K562 (cell line): ENCODE measurements at regions of chr11 and their contacts with region 1.

Region 1: DNA sequence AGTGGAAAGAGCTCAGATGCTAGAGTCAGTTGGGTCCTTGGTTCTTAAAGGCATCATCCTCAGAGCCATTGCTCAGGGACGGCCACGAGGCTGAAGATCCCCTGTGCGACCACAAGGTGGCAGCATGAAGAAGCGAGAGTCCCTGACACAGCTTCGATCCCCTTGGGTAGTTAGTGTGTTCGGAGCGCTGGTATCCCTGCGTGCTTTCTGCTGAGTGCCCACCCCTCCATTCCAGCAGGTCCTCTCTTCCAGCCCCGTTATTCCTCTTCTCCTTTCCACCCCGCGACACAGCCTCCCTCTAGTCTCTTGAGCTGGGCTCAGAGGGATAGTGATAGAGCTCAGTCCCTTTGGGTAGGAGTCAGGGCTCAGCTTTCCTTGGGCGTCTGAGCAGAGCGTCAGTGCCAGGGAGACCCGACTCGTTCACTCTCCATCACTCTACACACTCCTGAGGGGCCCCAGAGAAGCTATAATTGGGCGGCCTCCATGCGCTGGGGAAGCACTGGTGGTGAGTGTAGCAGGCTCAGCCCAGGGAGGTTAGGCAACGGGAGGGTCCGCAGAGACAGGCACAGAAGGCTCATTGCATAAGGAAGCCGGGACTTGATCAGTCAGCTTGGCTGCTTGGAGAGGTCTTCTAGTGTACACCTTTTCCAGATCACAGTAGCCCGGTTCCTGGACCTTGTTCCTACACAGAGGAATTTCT is at the start of gene OR51D1:
- DNase-seq: peak; percentile 82 to 87 (median 84)
- ATAC-seq: peak; percentile 99
- H3K4me3 ChIP-seq: no peak within 1 kb of the TSS
- H3K27ac ChIP-seq: no peak within 1 kb of the TSS
- H3K4me1 ChIP-seq: no peaks in the 10 kb centered on the region; a peak in 1 of 5 replicates
- H3K27me3 ChIP-seq: peaks cover 0 to 25% of the 10 kb centered on the region in 2 experiments; a peak in 3 of 5 replicates
- CTCF ChIP-seq: peak; percentile 84 to 91 (median 88)
- EP300 ChIP-seq: no peak
- POLR2A ChIP-seq: no peak
- RAD21 ChIP-seq: peak; percentile 75 to 91
- polyA plus RNA-seq, gene OR51D1: not detected

Region 2: DNA sequence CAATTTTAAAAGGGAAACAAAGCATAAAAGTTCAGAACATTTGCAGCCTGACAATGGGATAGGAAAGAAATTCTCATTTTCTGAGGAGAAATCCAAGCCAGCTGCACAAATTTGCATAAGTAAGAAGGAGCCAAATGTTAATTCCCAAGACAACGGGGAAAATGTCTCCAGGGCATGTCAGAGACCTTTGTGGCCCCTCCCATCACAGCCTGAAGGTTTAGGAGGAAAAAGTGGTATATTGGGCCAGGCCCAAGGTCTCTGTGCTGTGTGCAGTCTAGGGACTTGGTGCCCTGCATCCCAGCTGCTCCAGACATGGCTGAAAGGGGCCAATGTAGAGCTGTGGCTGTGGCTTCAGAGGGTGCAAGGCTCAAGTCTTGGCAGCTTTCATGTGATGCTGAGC is 145.4 kb after region 1 on chr11:
- CTCF ChIA-PET with region 1: no interaction called
- POLR2A ChIA-PET with region 1: no interaction called
- in situ Hi-C with region 1: no loop called
- intact Hi-C with region 1: loop called (anchors 2 kb)
- DNase-seq: no peak
- ATAC-seq: no peak
- H3K4me3 ChIP-seq: no peak overlapping the region
- H3K27ac ChIP-seq: no peak overlapping the region
- H3K4me1 ChIP-seq: no peaks in the 10 kb centered on the region
- H3K27me3 ChIP-seq: peaks cover 0 to 6% of the 10 kb centered on the region in 2 experiments; a peak in 1 of 5 replicates
- CTCF ChIP-seq: no peak
- EP300 ChIP-seq: no peak
- POLR2A ChIP-seq: no peak
- RAD21 ChIP-seq: no peak

Region 3: GRCh38 chr11:4926608-4927007 is 289.5 kb after region 1 on chr11:
- CTCF ChIA-PET with region 1: no interaction called
- POLR2A ChIA-PET with region 1: no interaction called
- in situ Hi-C with region 1: no loop called
- intact Hi-C with region 1: loop called (anchors 10 kb)
- DNase-seq: no peak
- ATAC-seq: no peak
- H3K4me3 ChIP-seq: no peak overlapping the region
- H3K27ac ChIP-seq: no peak overlapping the region
- H3K4me1 ChIP-seq: no peaks in the 10 kb centered on the region
- H3K27me3 ChIP-seq: peaks cover 2 to 9% of the 10 kb centered on the region in 2 experiments
- CTCF ChIP-seq: no peak
- EP300 ChIP-seq: no peak
- POLR2A ChIP-seq: no peak
- RAD21 ChIP-seq: no peak

Region 4: GRCh38 chr11:5004424-5005274 is 367.5 kb after region 1 on chr11:
- CTCF ChIA-PET with region 1: interaction called, 7 read pairs
- POLR2A ChIA-PET with region 1: interaction called, 4 read pairs
- in situ Hi-C with region 1: loop called (anchors 5 kb)
- intact Hi-C with region 1: loop called (anchors 1 kb)
- DNase-seq: peak; percentile 29 to 71 (median 36)
- ATAC-seq: peak; percentile 78
- H3K4me3 ChIP-seq: no peak overlapping the region
- H3K27ac ChIP-seq: no peak overlapping the region
- H3K4me1 ChIP-seq: no peaks in the 10 kb centered on the region
- H3K27me3 ChIP-seq: no peaks in the 10 kb centered on the region
- CTCF ChIP-seq: peak; percentile 65 to 76 (median 68); a peak in 4 of 6 replicates
- EP300 ChIP-seq: no peak
- POLR2A ChIP-seq: no peak
- RAD21 ChIP-seq: peak; percentile 75 to 86

Region 5: DNA sequence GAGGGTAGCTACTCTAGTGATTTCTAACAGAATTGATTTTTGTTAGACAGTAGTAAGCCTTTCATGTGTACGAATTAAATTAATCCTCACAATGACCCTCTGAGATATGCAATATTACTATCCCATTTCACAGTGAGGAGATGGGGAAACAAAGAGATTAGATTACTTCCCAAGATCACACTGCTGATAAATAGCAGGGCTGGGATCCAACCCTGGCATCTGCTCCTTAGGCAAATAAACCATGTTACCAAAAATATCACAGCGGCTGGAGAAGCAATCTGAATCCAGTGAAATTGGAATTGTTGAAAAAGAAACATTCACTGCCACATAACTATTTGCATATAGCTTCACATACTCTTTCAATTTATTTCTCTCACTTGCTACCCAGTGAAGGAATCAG is 1696.0 kb after region 1 on chr11:
- CTCF ChIA-PET with region 1: no interaction called
- POLR2A ChIA-PET with region 1: no interaction called
- in situ Hi-C with region 1: loop called (anchors 25 kb)
- intact Hi-C with region 1: no loop called
- DNase-seq: no peak
- ATAC-seq: no peak
- H3K4me3 ChIP-seq: no peak overlapping the region
- H3K27ac ChIP-seq: no peak overlapping the region
- H3K4me1 ChIP-seq: no peaks in the 10 kb centered on the region
- H3K27me3 ChIP-seq: peaks cover 0 to 6% of the 10 kb centered on the region in 2 experiments; a peak in 1 of 5 replicates
- CTCF ChIP-seq: no peak
- EP300 ChIP-seq: no peak
- POLR2A ChIP-seq: no peak
- RAD21 ChIP-seq: no peak